ENCODE measurements at regions of chr22 and their contacts with region 1.

Region 1: DNA sequence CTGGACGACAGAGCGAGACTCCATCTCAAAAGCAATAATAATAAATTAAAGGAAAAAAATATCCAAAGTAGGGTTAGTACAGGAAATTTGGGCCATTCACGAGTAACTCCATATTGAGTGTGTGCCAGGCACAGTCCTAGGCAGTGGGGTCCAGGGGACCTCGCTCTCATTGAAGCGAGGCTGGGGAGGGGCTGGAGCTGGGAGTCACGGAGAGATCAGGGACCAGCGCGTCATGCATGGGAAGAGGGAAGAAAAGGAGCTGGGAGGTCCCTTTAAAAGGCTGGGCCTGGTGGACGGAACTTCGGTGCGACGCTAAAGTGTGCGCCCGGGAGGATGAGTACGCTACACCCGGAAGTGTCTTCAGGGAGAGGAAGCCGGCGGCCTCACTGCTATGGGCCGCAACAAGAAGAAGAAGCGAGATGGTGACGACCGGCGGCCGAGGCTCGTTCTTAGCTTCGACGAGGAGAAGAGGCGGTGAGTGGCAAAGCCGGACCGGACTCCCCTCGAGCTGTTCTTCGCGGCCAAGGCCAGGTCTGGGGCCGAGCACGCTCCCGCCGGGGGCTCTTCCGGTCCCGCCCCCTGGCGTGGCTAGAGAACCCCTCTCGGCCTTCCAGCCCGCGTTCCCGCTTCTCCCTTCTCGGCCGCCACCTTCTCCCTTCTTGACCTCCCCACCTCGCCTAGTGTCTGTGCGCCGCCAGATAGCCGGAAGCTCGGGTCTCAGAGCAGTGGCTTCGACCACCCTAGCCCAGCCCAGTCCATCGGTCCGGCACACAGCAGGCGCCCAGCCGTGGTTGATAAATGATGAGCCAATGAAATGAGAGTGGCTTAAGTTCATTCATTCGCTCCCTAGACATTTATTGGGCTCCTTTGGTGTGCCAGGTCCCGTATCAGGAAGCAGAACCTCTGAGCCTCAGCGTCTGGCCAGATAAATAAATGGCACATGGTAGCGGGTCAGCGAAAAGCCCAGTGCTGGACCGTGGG is at the start of gene NOL12:
- DNase-seq: peak; percentile 84 to 89
- ATAC-seq: peak; percentile 72
- total RNA-seq, gene NOL12: 30.3 to 38.2 TPM

Region 2: GRCh38 chr22:37608477-37609239 is 77.6 kb before region 1 on chr22 and contains the start of gene GGA1:
- intact Hi-C with region 1: no loop called
- DNase-seq: peak; percentile 97
- ATAC-seq: peak; percentile 78
- total RNA-seq, gene GGA1: 56.9 to 73.3 TPM

Region 3: GRCh38 chr22:37623075-37624016 is 62.9 kb before region 1 on chr22:
- intact Hi-C with region 1: loop called in 1 of 2 experiments (anchors 5 kb)
- DNase-seq: peak; percentile 65 to 72
- ATAC-seq: peak; percentile 59

Region 4: DNA sequence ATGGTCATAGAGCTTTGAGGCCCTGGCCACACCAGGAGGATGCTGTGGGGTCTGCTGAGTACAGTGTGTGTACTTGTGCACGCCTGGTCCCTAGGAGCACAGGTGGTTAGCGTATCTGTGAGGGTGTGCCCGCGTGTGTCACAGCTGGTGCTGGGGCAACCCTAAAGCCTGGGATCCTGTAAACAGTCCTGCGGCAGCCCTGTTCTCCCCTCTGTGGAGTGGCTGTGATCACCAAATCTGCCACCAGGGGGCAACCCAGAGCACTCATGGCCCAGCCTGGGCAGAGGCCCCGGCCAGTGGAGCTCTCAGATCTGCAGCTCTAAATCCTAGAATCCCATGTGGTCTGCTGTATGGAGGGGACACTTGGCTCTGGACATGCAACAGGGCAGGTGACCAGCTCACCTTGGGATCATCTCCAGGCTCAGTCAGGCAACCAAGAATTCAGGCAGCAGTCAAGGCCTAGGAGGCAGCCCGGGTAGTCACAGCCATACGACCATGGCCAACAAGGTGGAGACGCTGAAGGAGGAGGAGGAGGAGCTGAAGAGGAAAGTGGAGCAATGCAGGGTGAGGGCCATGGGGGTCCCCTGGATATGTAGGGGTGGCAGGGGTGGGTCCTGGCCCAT is 43.0 kb before region 1 on chr22:
- intact Hi-C with region 1: loop called in 1 of 2 experiments (anchors 2 kb)
- DNase-seq: peak; percentile 82 to 94
- ATAC-seq: peak; percentile 22

Region 5: GRCh38 chr22:37734964-37735451 is 48.7 kb after region 1 on chr22:
- intact Hi-C with region 1: loop called in 1 of 2 experiments (anchors 10 kb)
- DNase-seq: peak in 1 of 2 donors; percentile 67
- ATAC-seq: peak; percentile 43